ENCODE measurements at regions of chr20 and their contacts with region 1.

Region 1: DNA sequence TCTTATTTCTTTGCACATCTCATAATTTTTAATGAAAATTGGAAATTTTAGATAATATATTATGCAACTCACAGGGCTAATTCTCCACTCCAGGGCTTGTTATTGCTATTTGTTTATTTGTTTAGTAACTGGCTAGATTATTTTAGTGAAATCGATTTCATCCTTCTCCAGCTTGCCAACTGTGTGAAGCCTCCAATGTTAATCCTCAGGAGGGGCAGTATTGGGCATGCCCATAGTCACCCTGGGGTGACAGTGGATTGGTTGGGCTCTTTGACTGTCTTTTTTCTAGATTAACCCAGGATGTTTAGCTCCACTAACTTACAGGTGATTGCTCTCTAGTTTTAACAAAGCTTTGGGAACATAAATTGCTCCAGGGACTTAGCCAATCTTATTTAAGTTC is 450.1 kb downstream of the BMP2 start:
- DNase-seq: no peak
- H3K4me3 ChIP-seq: no peak overlapping the region
- H3K27ac ChIP-seq: no peak overlapping the region
- H3K4me1 ChIP-seq: no peaks in the 10 kb centered on the region
- H3K27me3 ChIP-seq: no peaks in the 10 kb centered on the region
- CTCF ChIP-seq: no peak

Region 2: GRCh38 chr20:6966721-6967120 is 250.9 kb before region 1 on chr20:
- CTCF ChIA-PET with region 1: no interaction called
- dilution Hi-C with region 1: no loop called
- in situ Hi-C with region 1: no loop called
- intact Hi-C with region 1: no loop called
- DNase-seq: peak; percentile 24
- H3K4me3 ChIP-seq: no peak overlapping the region
- H3K27ac ChIP-seq: no peak overlapping the region
- H3K4me1 ChIP-seq: no peaks in the 10 kb centered on the region
- H3K27me3 ChIP-seq: no peaks in the 10 kb centered on the region
- CTCF ChIP-seq: no peak

Region 3: DNA sequence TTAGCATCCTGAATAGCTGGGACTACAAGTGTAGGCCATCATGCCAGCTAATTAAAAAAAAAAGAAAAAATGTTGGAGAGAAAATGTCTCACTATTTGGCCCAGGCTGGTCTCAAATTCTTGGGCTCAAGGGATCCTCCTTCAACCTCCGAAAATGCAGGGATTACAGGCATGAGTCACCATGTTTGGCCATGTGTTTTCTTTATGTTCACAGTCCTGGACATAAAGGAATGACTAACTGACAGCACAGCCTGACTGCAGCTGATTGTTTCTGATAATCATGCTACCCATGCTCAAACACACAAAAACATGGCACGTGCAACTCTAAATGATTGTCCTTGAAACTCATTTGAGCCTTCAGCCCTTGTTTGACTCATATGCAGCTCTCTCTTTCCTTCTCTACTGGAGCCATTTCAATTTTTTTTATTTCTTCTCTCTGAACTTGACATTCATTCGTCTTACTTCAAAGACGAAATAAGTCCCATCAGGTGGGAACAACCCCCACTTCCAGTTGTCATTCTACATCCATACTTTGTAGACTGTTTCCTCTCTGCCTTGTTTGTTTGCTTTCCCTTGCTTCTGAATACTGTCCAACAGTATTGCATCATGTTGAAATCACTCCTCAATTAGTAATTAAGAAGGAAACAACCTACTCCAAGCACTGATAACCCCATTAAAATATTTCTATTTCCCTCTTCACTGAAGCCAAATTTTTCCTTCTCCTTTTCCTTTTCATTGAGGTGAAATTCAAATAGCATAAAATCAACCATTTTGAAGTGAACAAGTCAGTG is 37.2 kb before region 1 on chr20:
- CTCF ChIA-PET with region 1: no interaction called
- dilution Hi-C with region 1: loop called (anchors 5 kb)
- in situ Hi-C with region 1: no loop called
- intact Hi-C with region 1: no loop called
- DNase-seq: peak; percentile 69
- H3K4me3 ChIP-seq: no peak overlapping the region
- H3K27ac ChIP-seq: no peak overlapping the region
- H3K4me1 ChIP-seq: peaks cover 13% of the 10 kb centered on the region
- H3K27me3 ChIP-seq: no peaks in the 10 kb centered on the region
- CTCF ChIP-seq: no peak

Region 4: DNA sequence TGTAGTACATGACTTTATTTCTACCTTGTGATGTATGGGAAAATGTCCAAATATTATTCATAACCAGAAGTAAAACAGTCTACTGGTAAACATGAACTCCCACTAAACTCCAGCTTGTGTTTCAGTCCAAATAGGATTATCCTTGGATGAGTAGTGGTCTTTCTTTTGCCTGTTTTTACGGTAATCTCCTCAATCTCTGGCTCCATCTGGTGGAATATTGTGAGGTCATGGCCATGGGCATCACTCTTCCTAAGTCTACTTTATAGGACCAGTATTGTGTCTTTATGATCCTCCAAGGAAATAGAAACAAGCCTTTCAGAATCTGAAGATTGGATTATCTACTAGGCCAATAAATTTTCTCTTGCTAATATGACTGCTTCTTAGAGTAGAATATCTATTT is 54.9 kb after region 1 on chr20:
- CTCF ChIA-PET with region 1: no interaction called
- dilution Hi-C with region 1: loop called (anchors 5 kb)
- in situ Hi-C with region 1: no loop called
- intact Hi-C with region 1: no loop called
- DNase-seq: no peak
- H3K4me3 ChIP-seq: no peak overlapping the region
- H3K27ac ChIP-seq: no peak overlapping the region
- H3K4me1 ChIP-seq: no peaks in the 10 kb centered on the region
- H3K27me3 ChIP-seq: no peaks in the 10 kb centered on the region
- CTCF ChIP-seq: peak; percentile 10 to 44